Posterior cingulate gyrus (tissue), 11 donors: ENCODE measurements at regions of chr1 and their contacts with region 1.

Region 1: DNA sequence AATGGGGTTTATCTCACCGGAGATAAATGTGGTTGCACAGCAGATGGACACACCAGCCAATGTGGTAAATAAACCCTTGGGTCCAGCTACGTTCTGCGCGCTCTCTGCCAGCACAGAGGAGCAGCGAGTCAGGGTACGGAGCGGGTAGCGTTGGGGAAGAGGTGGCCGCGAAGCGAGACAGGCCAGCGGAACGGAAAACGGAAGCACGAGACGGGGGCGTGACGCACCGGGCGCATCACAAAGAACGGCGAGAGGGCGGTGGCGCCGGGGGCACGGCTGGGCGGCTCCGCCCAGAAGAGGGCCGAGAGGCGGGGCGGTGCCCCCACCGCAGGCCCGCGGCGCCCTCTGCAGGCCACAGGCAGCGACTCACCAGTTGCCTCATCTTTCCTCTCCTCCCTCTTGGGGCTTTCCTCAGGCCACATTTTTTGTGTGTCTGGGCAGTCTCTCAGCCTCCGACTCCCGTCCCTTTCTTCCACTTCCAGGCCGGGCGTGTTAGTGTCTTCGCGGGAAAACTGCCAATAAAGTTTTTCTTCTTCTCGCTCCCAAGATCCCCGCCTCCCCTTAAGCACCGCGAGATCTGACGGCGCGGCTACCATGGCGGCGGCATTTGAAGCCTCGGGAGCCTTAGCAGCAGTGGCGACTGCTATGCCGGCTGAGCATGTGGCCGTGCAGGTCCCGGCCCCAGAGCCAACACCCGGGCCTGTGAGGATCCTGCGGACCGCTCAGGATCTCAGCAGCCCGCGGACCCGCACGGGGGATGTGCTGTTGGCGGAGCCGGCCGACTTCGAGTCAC is at the start of gene DDX20:
- DNase-seq: peak; percentile 86 to 99 (median 90)

Region 2: GRCh38 chr1:111507411-111508201 is 247.9 kb before region 1 on chr1:
- intact Hi-C with region 1: loop called (anchors 1 kb)
- DNase-seq: peak in 4 of 10 donors; percentile 42 to 90 (median 62)

Region 3: DNA sequence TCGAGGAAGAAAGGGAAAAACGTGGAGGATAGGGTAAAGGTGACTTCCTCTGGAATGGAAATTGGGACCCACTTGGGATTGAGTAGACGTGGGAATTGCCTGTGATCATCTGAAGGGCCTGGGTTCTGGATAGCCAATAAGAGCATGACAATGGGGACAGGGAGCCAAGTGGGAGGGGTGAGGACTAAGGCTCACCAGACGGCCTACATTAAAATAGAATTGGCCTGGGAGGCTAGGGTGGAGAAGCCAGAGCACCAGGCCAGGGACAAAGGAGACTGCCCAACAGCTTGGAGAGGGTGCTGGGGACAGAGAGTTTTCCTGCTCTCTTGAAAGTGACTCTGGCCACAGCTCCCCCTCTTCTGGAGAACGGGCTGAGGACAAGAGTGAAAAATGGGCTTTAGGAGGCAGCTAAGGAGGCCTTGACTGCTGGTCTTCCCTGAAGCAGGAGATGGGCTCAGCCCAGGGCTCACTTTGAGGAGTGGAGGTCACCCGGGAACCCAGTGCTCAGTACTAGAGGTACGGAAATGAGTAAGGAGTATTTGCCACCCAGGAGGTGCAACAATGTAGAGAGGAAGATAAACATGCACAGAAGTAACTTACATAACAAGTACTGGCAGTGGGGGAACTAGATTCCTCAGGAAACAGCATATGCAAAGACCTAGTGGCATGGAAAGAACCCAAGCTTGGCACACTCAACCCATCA is 35.1 kb before region 1 on chr1:
- intact Hi-C with region 1: loop called (anchors 1 kb)
- DNase-seq: no peak

Region 4: GRCh38 chr1:111738436-111739193 is 16.9 kb before region 1 on chr1:
- intact Hi-C with region 1: loop called (anchors 1 kb)
- DNase-seq: peak; percentile 61 to 98 (median 80)